GM10248 (cell line): ENCODE measurements at regions of chr3 and their contacts with region 1.

Region 1: GRCh38 chr3:6706777-6707176 is 154.1 kb upstream of the GRM7 start:
- DNase-seq: no peak
- CTCF ChIP-seq: no peak

Region 2: GRCh38 chr3:6444888-6445658 is 261.7 kb before region 1 on chr3:
- CTCF ChIA-PET with region 1: no interaction called
- POLR2A ChIA-PET with region 1: no interaction called
- DNase-seq: no peak
- CTCF ChIP-seq: no peak

Region 3: GRCh38 chr3:6667354-6667753 is 39.4 kb before region 1 on chr3:
- CTCF ChIA-PET with region 1: no interaction called
- POLR2A ChIA-PET with region 1: no interaction called
- DNase-seq: no peak
- CTCF ChIP-seq: no peak

Region 4: GRCh38 chr3:6686691-6687090 is 20.1 kb before region 1 on chr3:
- CTCF ChIA-PET with region 1: no interaction called
- POLR2A ChIA-PET with region 1: no interaction called
- DNase-seq: no peak
- CTCF ChIP-seq: no peak

Region 5: GRCh38 chr3:6717026-6717943 is 10.5 kb after region 1 on chr3:
- CTCF ChIA-PET with region 1: interaction called, 12 read pairs
- POLR2A ChIA-PET with region 1: no interaction called
- DNase-seq: peak; percentile 28
- CTCF ChIP-seq: no peak